ENCODE measurements at regions of chr18 and their contacts with region 1.

Region 1: DNA sequence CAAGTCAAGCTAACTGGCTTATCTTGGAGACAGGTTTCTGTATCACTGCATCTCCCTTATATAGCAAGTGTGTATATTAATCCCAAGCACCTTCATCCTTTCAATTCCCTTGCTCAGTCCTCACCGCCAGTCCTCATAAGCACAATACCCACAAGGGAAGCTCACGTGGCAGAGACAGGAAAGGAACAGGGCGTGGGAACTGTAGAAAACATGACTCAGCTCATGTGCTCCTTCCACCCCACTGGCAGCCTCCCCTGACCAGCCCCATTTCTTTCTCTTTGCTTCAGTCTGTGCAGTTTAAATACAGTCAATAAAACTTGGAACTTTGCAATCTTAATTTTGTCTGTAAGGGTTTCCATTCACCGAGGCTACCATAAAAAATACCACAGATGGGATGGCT is 36.5 kb upstream of the CDH19 start:
- DNase-seq: peak; percentile 72
- H3K4me3 ChIP-seq: no peak overlapping the region
- H3K27ac ChIP-seq: no peak overlapping the region
- H3K4me1 ChIP-seq: peaks cover 9% of the 10 kb centered on the region
- H3K27me3 ChIP-seq: no peaks in the 10 kb centered on the region
- CTCF ChIP-seq: no peak
- POLR2A ChIP-seq: no peak

Region 2: GRCh38 chr18:66621816-66622576 is 18.4 kb before region 1 on chr18:
- CTCF ChIA-PET with region 1: no interaction called
- POLR2A ChIA-PET with region 1: interaction called, 12 read pairs
- dilution Hi-C with region 1: no loop called
- intact Hi-C with region 1: no loop called
- DNase-seq: no peak
- H3K4me3 ChIP-seq: no peak overlapping the region
- H3K27ac ChIP-seq: no peak overlapping the region
- H3K4me1 ChIP-seq: peaks cover 11% of the 10 kb centered on the region
- H3K27me3 ChIP-seq: no peaks in the 10 kb centered on the region
- CTCF ChIP-seq: no peak
- POLR2A ChIP-seq: no peak